B cell (primary cell): ENCODE measurements at regions of chr21 and their contacts with region 1.

Region 1: DNA sequence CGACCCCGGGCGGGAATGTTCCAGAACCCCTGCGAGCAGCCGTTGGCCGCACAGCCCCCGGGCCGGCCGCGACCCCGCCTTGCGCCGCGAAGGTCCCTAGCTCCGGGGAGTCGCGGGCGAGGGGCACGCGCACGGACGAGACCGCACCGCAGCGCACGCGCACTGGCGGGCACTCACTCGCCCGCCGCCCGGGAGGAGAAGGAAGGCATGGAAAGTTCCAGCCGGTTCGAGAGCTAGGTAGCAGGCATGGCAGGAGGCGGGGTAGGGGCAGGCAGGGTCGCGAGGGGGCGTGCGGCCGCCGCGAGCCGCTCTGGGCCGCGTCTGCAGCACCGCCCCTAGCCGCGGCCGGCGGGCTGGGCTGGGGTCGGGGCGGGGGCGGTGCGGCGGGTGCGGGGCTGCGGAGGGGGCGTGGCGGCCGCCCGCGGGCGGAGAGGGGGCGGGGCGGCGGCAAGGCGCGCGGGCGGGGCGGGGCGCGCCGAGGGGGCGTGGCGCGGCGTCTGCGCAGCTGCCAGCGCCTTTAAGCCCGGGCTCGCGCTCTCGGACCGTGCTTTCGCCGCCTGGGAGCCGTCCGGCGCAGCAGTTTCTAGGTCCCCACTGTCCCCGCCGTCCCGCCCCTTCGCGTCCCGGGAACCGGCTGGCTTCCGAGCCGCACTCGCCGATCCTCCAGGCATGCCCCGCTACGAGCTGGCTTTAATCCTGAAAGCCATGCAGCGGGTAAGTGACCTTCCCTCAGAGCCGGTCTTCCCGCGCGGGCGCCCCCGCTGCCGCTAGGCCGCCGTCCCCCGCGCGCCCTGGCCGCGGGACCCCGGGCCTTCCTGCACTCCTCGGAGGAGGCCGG is at the starts of genes MRPS6 and SLC5A3:
- DNase-seq: peak; percentile 88
- ATAC-seq: peak; percentile 78
- H3K4me3 ChIP-seq: peak within 1 kb of the TSS; percentile 60 to 92 (median 79)
- H3K4me3 Mint-ChIP-seq: peak within 1 kb of the TSS; percentile 92
- H3K27ac ChIP-seq: peak within 1 kb of the TSS; percentile 51 to 69
- H3K27ac Mint-ChIP-seq: peak within 1 kb of the TSS; percentile 91
- H3K4me1 ChIP-seq: peaks cover 13 to 20% of the 10 kb centered on the region in 2 donors
- H3K4me1 Mint-ChIP-seq: peaks cover 45% of the 10 kb centered on the region
- H3K27me3 ChIP-seq: no peaks in the 10 kb centered on the region
- H3K27me3 Mint-ChIP-seq: no peaks in the 10 kb centered on the region
- CTCF ChIP-seq: no peak
- total RNA-seq, gene MRPS6: 36.5 and 37.9 TPM in 2 replicates
- total RNA-seq, gene SLC5A3: 16.7 and 18.0 TPM in 2 replicates

Region 2: GRCh38 chr21:33641336-33642026 is 431.8 kb before region 1 on chr21 and contains the start of gene CRYZL1:
- CTCF ChIA-PET with region 1: no interaction called
- POLR2A ChIA-PET with region 1: no interaction called
- intact Hi-C with region 1: loop called (anchors 2 kb)
- DNase-seq: peak; percentile 100
- ATAC-seq: peak; percentile 77
- H3K4me3 ChIP-seq: peak within 1 kb of the TSS; percentile 71 to 91 (median 79)
- H3K4me3 Mint-ChIP-seq: peak within 1 kb of the TSS; percentile 94
- H3K27ac ChIP-seq: peak within 1 kb of the TSS; percentile 84 to 90
- H3K27ac Mint-ChIP-seq: peak within 1 kb of the TSS; percentile 97
- H3K4me1 ChIP-seq: peaks cover 16 to 20% of the 10 kb centered on the region in 2 donors
- H3K4me1 Mint-ChIP-seq: peaks cover 27% of the 10 kb centered on the region
- H3K27me3 ChIP-seq: peaks cover 0 to 27% (median 19%) of the 10 kb centered on the region in 4 experiments
- H3K27me3 Mint-ChIP-seq: peaks cover 22% of the 10 kb centered on the region
- CTCF ChIP-seq: no peak
- total RNA-seq, gene CRYZL1: 60.6 and 66.9 TPM in 2 replicates

Region 3: GRCh38 chr21:33915368-33916199 is 157.7 kb before region 1 on chr21 and contains the start of gene ATP5PO:
- CTCF ChIA-PET with region 1: no interaction called
- POLR2A ChIA-PET with region 1: no interaction called
- intact Hi-C with region 1: loop called (anchors 1 kb)
- DNase-seq: peak; percentile 97
- ATAC-seq: peak; percentile 100
- H3K4me3 ChIP-seq: peak within 1 kb of the TSS; percentile 62 to 99 (median 85)
- H3K4me3 Mint-ChIP-seq: peak within 1 kb of the TSS; percentile 98
- H3K27ac ChIP-seq: peak within 1 kb of the TSS; percentile 49 to 86
- H3K27ac Mint-ChIP-seq: peak within 1 kb of the TSS; percentile 94
- H3K4me1 ChIP-seq: peaks cover 14 to 16% of the 10 kb centered on the region in 2 donors
- H3K4me1 Mint-ChIP-seq: peaks cover 27% of the 10 kb centered on the region
- H3K27me3 ChIP-seq: no peaks in the 10 kb centered on the region
- H3K27me3 Mint-ChIP-seq: no peaks in the 10 kb centered on the region
- CTCF ChIP-seq: no peak
- total RNA-seq, gene ATP5PO: 123 and 124 TPM in 2 replicates

Region 4: DNA sequence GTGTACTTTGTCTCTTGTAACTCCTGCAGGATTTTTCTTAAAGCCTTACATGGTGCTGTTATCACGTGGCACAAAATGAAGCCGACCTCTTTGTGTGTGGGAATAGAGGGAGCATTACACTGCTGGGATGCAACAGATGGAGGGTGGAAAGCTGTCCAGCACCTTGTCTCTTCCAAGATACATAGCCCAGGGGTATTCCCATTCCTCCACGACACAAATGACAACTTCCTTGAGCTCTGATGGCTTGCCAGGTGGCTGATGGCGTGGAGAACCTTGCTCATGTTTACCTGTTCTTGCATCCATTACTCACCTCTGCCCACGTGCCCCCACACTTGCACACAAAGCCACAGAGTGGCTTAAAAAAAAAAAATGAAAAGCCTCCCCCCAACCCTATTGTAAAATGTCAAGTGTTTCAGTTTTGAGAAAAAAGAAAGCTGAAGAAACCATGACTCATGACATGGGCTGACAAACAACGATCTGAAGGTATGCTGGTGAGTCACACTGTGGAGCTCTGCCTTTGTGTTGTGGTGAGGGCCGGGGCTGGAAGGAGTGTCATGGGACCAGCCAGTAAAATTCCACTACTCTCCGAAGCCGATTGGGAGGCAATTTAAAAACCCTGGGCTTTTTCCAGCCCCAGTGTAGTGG is 125.7 kb before region 1 on chr21:
- CTCF ChIA-PET with region 1: interaction called, 3 read pairs
- POLR2A ChIA-PET with region 1: interaction called, 15 read pairs
- intact Hi-C with region 1: loop called (anchors 1 kb)
- DNase-seq: peak; percentile 48
- ATAC-seq: peak; percentile 67
- H3K4me3 ChIP-seq: no peak overlapping the region
- H3K4me3 Mint-ChIP-seq: peak overlapping the region; percentile 64
- H3K27ac ChIP-seq: peak overlapping the region; percentile 74 to 83
- H3K27ac Mint-ChIP-seq: peak overlapping the region; percentile 95
- H3K4me1 ChIP-seq: peaks cover 31 to 42% of the 10 kb centered on the region in 2 donors
- H3K4me1 Mint-ChIP-seq: peaks cover 50% of the 10 kb centered on the region
- H3K27me3 ChIP-seq: no peaks in the 10 kb centered on the region
- H3K27me3 Mint-ChIP-seq: no peaks in the 10 kb centered on the region
- CTCF ChIP-seq: no peak

Region 5: DNA sequence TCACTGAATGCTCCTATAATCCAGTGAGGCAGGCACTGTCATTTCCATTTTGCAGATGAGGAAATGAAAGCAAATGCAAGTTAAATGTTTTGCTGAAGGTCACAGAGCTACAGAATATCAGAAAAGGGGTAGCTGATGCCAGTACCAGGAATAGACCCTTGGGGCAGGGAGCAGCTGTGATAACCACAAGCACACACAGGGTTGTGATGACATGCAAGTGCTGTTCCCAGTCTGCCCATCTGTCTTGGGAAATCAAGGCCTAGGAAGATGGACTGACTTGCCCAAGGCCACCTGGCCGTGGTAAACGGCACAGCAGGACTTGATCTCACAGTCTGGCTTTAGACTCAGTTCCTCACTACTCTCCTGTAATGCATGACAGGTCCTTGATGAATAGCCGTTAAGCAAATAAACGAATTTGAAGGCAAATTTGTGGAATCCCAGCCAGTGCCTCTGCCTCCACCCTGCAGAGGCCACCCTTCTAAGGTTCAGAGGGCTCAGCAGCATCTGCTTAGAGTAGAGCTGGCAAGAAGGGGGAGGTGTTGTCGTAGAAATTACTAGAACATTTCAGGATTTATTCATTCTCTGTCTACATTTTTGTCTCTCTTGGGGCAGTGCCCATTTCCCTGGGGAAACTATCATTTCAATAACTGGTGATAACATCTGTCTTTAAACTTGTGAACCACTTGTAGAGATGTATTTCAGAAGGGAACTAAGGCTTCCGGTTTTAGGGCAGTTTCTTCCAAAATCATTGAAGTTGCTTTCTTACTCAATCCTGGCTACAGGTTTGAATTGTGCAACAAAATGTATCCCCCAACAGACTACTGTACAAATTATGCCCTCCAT is 53.0 kb before region 1 on chr21:
- CTCF ChIA-PET with region 1: interaction called, 7 read pairs
- POLR2A ChIA-PET with region 1: interaction called, 11 read pairs
- intact Hi-C with region 1: loop called (anchors 1 kb)
- DNase-seq: peak; percentile 73
- ATAC-seq: peak; percentile 62
- H3K4me3 ChIP-seq: peak overlapping the region in 2 of 5 experiments; percentile 15 to 16
- H3K4me3 Mint-ChIP-seq: peak overlapping the region; percentile 85
- H3K27ac ChIP-seq: peak overlapping the region; percentile 70 to 83
- H3K27ac Mint-ChIP-seq: peak overlapping the region; percentile 96
- H3K4me1 ChIP-seq: peaks cover 50 to 56% of the 10 kb centered on the region in 2 donors
- H3K4me1 Mint-ChIP-seq: peaks cover 50% of the 10 kb centered on the region
- H3K27me3 ChIP-seq: no peaks in the 10 kb centered on the region
- H3K27me3 Mint-ChIP-seq: no peaks in the 10 kb centered on the region
- CTCF ChIP-seq: peak; percentile 27

Region 6: DNA sequence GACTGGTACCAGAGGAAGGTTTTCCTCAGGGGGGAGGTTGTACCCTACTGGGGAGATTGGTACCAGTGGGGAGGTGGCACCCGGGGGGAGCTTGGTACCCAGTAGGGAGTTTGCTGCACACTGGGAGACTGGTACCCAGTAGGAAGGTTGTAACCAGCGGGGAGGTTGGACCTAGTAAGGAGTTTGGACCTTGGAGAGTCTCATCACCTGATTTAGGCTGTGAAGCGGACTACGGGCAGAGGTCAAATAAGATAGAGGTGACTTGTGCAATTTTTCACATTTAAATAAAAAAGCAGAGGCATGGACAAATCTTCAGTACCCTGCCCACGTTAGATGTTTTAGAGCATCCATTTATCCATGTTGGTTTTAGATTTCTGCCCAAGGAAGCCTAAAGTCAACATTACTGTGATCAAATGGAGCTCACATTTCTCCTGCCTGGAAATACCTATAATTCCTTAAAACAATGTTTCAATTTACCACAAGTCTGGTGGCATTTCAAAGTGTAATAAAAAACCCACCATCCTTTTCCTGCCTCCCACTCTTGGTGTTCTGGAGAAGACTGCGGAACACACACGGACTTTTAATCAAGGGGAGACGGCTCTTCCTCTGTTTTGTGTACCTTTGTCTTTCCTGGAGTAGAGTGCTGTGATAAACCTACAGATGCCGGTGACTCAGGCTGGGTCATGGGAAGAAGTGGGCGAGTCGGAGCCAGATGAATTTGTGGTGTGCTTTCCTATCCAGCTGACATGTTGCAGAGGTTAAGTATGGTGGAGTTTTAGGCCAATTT is 36.0 kb before region 1 on chr21:
- CTCF ChIA-PET with region 1: no interaction called
- POLR2A ChIA-PET with region 1: no interaction called
- intact Hi-C with region 1: no loop called
- DNase-seq: no peak
- ATAC-seq: no peak
- H3K4me3 ChIP-seq: no peak overlapping the region
- H3K4me3 Mint-ChIP-seq: no peak overlapping the region
- H3K27ac ChIP-seq: no peak overlapping the region
- H3K27ac Mint-ChIP-seq: no peak overlapping the region
- H3K4me1 ChIP-seq: no peaks in the 10 kb centered on the region
- H3K4me1 Mint-ChIP-seq: no peaks in the 10 kb centered on the region
- H3K27me3 ChIP-seq: no peaks in the 10 kb centered on the region
- H3K27me3 Mint-ChIP-seq: peaks cover 2% of the 10 kb centered on the region
- CTCF ChIP-seq: no peak

Region 7: DNA sequence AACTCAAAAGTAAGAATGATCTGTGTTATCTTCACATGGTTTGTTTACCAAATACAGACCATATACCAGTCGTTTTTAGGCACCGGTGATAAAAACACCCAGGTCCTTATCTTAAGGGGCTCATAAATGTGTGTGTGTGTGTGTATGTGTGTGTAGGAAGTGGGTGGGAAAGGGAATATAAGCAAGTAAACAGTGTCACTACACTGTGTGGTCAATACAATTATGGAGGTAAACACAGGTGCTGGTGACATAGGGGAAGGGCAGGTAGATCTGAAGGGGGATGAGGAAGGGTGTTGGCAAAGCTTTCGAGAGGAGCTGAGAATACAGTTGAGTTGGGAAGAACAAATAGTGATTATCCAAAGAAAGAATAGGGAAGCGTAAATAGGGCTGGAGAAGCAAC is 19.0 kb before region 1 on chr21:
- CTCF ChIA-PET with region 1: no interaction called
- POLR2A ChIA-PET with region 1: no interaction called
- intact Hi-C with region 1: no loop called
- DNase-seq: no peak
- ATAC-seq: no peak
- H3K4me3 ChIP-seq: no peak overlapping the region
- H3K4me3 Mint-ChIP-seq: no peak overlapping the region
- H3K27ac ChIP-seq: no peak overlapping the region
- H3K27ac Mint-ChIP-seq: no peak overlapping the region
- H3K4me1 ChIP-seq: peaks cover 0 to 2% of the 10 kb centered on the region in 2 donors
- H3K4me1 Mint-ChIP-seq: peaks cover 9% of the 10 kb centered on the region
- H3K27me3 ChIP-seq: no peaks in the 10 kb centered on the region
- H3K27me3 Mint-ChIP-seq: no peaks in the 10 kb centered on the region
- CTCF ChIP-seq: no peak

Region 8: DNA sequence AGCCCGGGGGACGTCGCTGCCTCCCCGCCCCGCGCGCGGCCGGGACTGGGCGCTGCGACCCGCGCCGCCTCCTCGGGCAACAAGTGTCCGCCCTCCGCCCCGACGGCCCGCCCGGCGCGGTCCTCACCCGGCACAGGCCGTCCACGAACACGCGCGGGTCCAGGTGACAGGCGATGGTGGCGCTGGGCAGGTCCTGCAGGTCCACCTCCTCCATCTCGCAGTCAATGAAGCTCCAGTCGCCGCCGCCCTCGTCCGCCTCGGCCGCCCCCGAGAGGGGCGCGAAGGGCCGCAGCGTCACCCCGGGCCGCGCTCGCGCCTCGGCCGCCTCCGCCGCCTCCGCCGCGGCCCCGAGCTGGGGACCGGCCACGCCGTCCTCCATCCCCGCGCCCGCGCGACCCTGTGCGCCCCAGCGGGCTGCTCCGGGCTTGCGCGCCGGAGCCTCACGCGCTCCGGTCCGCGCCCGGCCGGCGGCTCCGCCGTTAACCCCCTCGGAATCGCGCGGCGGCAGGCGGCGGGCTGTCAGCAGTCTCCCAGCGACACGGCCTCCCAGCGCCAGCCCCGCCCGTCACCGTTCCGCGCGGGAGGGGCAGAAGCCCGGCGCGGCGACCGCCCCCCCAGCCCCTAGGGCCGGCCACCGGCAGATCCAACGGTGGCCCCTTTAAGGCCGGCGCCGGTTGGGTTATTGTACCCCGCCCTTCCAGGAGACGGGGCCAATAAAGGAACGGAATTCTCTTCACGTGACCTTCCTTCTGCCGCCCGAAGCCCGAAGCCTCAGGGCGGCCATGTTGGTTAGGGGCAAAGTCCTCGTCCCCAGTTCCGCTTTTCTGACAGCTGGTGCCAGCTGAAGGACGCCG is 541.6 kb after region 1 on chr21 and contains the start of gene RCAN1:
- CTCF ChIA-PET with region 1: no interaction called
- POLR2A ChIA-PET with region 1: no interaction called
- intact Hi-C with region 1: loop called (anchors 2 kb)
- DNase-seq: peak; percentile 94
- ATAC-seq: peak; percentile 95
- H3K4me3 ChIP-seq: peak within 1 kb of the TSS; percentile 41 to 74 (median 59)
- H3K4me3 Mint-ChIP-seq: peak within 1 kb of the TSS; percentile 91
- H3K27ac ChIP-seq: peak within 1 kb of the TSS in 1 of 2 donors; percentile 71
- H3K27ac Mint-ChIP-seq: peak within 1 kb of the TSS; percentile 84
- H3K4me1 ChIP-seq: peaks cover 9 to 11% of the 10 kb centered on the region in 2 donors
- H3K4me1 Mint-ChIP-seq: peaks cover 16% of the 10 kb centered on the region
- H3K27me3 ChIP-seq: peaks cover 0 to 7% (median 0%) of the 10 kb centered on the region in 4 experiments
- H3K27me3 Mint-ChIP-seq: peaks cover 15% of the 10 kb centered on the region
- CTCF ChIP-seq: no peak
- total RNA-seq, gene RCAN1: 4.2 and 4.4 TPM in 2 replicates

Region 9: GRCh38 chr21:36060159-36060921 is 1987.1 kb after region 1 on chr21 and contains the start of gene SETD4:
- CTCF ChIA-PET with region 1: no interaction called
- POLR2A ChIA-PET with region 1: no interaction called
- intact Hi-C with region 1: loop called (anchors 10 kb)
- DNase-seq: peak; percentile 96
- ATAC-seq: peak; percentile 89
- H3K4me3 ChIP-seq: peak within 1 kb of the TSS; percentile 80 to 95 (median 95)
- H3K4me3 Mint-ChIP-seq: peak within 1 kb of the TSS; percentile 92
- H3K27ac ChIP-seq: peak within 1 kb of the TSS; percentile 73 to 90
- H3K27ac Mint-ChIP-seq: peak within 1 kb of the TSS; percentile 97
- H3K4me1 ChIP-seq: peaks cover 3 to 15% of the 10 kb centered on the region in 2 donors
- H3K4me1 Mint-ChIP-seq: peaks cover 22% of the 10 kb centered on the region
- H3K27me3 ChIP-seq: no peaks in the 10 kb centered on the region
- H3K27me3 Mint-ChIP-seq: no peaks in the 10 kb centered on the region
- CTCF ChIP-seq: no peak
- total RNA-seq, gene SETD4: 48.5 and 51.5 TPM in 2 replicates